H1 (cell line): ENCODE measurements at regions of chr5 and their contacts with region 1.

Region 1: DNA sequence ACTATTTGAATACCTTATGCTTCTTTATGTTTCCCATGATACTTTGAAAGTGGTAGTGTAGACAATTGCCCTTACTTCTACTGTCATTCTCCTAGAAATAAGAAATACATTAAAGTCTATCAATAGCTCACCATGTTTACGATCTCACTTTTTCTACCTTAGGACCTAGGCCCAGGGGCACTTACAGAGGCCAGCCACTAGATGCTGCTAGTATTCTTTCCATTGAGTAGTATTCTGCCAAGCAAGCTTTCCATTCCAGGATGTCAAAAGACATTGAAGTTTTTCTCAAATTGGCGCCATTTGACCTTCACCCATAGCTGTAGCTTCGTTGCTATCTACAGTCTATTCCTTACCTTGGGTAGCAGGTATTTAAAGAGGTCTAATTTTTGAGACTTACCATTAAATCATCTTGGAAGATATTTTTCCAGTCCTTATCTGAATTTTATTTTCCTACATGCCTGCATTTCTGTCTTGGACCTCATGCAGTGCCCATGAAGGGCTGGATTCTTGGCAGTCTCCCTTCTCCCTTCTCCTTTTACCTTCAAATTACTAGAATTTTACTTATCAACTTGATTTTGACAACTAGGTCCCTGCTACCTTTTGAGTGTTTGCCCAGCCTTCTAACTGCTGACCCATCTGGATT is 246.0 kb upstream of the NUDT12 start:
- DNase-seq: peak; percentile 17 to 45
- H3K4me3 ChIP-seq: no peak overlapping the region
- H3K27ac ChIP-seq: no peak overlapping the region
- H3K4me1 ChIP-seq: no peaks in the 10 kb centered on the region
- H3K27me3 ChIP-seq: no peaks in the 10 kb centered on the region
- CTCF ChIP-seq: peak in 2 of 3 experiments; percentile 82 to 97; a peak in 3 of 4 replicates
- EP300 ChIP-seq: no peak
- POLR2A ChIP-seq: no peak
- RAD21 ChIP-seq: peak; percentile 99

Region 2: DNA sequence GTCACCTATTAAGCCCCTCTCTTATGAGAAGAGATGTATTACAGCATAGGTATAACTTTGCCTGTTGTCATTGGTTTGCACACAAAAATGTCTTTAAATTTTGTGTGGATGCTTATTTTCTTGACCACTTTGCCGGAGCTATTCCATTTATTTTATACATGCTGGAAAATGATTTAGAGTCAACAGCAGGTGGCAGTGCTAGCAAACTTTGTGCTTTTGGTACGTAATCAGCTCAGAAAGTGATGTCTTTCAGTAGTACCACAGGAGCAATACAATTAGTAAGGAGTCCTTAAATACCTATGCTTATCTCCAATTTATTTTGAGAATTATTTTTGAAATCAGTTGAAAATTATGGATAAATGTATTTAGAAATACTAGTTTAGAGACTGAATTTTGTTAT is 226.2 kb before region 1 on chr5:
- CTCF ChIA-PET with region 1: interaction called, 11 read pairs
- POLR2A ChIA-PET with region 1: no interaction called
- DNase-seq: no peak
- H3K4me3 ChIP-seq: no peak overlapping the region
- H3K27ac ChIP-seq: no peak overlapping the region
- H3K4me1 ChIP-seq: peaks cover 0 to 4% (median 0%) of the 10 kb centered on the region in 4 experiments; a peak in 2 of 7 replicates
- H3K27me3 ChIP-seq: no peaks in the 10 kb centered on the region
- CTCF ChIP-seq: peak in 2 of 3 experiments; percentile 52 to 54; a peak in 3 of 4 replicates
- EP300 ChIP-seq: no peak
- POLR2A ChIP-seq: no peak
- RAD21 ChIP-seq: peak; percentile 86 to 87

Region 3: DNA sequence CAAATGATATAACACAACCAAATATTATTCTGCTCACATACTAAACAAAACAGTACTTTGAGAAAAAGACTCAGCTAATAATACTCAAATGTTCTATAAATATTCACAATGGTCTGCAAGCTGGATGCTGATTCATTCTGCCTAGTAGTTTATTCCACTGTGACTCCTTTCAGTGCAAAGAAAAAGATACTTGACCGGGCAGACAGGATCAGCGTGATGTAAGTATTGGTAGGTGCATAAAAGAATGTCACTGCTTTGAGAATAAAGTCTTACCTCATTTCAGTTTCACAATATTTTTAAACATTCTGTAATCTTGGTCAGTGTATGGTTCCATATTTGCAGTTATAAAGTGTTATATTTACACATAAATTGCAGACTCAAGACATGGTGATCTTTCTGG is 23.0 kb before region 1 on chr5:
- CTCF ChIA-PET with region 1: interaction called, 10 read pairs
- POLR2A ChIA-PET with region 1: no interaction called
- DNase-seq: no peak
- H3K4me3 ChIP-seq: no peak overlapping the region
- H3K27ac ChIP-seq: no peak overlapping the region
- H3K4me1 ChIP-seq: no peaks in the 10 kb centered on the region
- H3K27me3 ChIP-seq: no peaks in the 10 kb centered on the region
- CTCF ChIP-seq: no peak
- EP300 ChIP-seq: no peak
- POLR2A ChIP-seq: no peak
- RAD21 ChIP-seq: no peak

Region 4: DNA sequence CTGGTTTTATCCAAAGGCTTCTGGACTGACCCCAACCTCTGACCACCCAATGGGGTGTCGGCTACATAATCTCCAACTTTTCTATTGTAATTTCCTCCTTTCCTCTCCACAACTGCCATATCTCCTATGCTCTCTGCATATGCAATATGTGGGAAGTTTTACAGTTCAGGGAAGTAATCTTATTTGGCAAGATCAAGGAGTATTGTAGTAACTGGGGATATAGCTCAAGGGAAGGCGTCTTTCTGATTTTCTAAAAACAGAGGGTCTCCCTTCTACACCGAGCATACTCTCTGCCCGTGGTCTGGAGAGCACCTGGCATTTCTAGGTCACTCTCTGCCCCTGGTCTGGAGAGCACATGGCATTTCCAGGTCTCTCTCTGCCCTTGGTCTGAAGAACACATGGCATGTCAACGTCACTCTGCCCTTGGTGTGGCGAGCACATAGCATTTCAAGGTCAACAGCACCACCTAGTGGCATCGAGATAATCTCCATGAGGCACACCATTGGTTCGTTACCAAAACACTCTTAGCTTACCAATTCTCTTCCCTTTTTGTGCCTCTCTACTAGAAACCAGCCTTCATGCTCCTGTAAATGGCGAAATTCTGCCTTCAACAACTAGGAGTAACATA is 370.4 kb after region 1 on chr5:
- CTCF ChIA-PET with region 1: interaction called, 46 read pairs
- POLR2A ChIA-PET with region 1: no interaction called
- DNase-seq: peak; percentile 36 to 63
- H3K4me3 ChIP-seq: peak overlapping the region in 1 of 4 experiments; percentile 14; a peak in 1 of 8 replicates
- H3K27ac ChIP-seq: no peak overlapping the region
- H3K4me1 ChIP-seq: no peaks in the 10 kb centered on the region
- H3K27me3 ChIP-seq: no peaks in the 10 kb centered on the region
- CTCF ChIP-seq: peak; percentile 54 to 85 (median 61)
- EP300 ChIP-seq: no peak
- POLR2A ChIP-seq: no peak
- RAD21 ChIP-seq: peak; percentile 92 to 93